Esophagus squamous epithelium (tissue), 5 donors: ENCODE measurements at regions of chr18 and their contacts with region 1.

Region 1: DNA sequence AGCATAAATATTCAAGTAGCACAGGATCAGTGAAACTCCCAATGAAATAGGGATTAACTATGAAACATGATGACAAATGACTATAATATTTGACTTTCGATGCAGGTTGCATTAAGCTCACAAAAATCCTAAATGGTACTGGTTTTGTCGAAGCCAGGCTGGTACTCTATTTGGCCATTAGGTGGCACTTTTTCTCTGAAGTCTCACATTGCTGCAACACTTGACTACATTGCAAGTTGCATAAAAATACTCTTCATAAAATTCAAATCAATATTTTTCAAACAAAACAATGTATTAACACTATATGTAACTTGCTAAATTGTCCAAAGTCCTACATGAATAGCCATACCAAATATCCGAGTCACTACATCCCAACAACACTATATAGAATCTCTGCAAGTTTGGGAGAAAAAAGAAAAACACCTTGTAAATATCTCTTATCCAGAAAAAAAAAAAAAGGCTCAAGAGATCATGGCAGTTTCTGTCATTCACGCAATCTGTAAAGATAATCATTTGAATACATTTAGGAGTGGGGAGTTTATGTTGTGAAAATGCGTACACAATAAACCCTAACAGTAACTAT is 9.5 kb downstream of the RTTN start:
- DNase-seq: no peak
- H3K4me3 ChIP-seq: no peak overlapping the region
- H3K27ac ChIP-seq: no peak overlapping the region
- H3K4me1 ChIP-seq: no peaks in the 10 kb centered on the region
- H3K27me3 ChIP-seq: no peaks in the 10 kb centered on the region
- CTCF ChIP-seq: peak; percentile 40 to 82 (median 70)
- POLR2A ChIP-seq: no peak

Region 2: GRCh38 chr18:70431203-70431624 is 235.3 kb after region 1 on chr18:
- intact Hi-C with region 1: loop called (anchors 5 kb)
- DNase-seq: no peak
- H3K4me3 ChIP-seq: no peak overlapping the region
- H3K27ac ChIP-seq: peak overlapping the region in 1 of 4 donors; percentile 55
- H3K4me1 ChIP-seq: peaks cover 0 to 27% (median 11%) of the 10 kb centered on the region in 3 donors
- H3K27me3 ChIP-seq: no peaks in the 10 kb centered on the region
- CTCF ChIP-seq: no peak
- POLR2A ChIP-seq: no peak

Region 3: DNA sequence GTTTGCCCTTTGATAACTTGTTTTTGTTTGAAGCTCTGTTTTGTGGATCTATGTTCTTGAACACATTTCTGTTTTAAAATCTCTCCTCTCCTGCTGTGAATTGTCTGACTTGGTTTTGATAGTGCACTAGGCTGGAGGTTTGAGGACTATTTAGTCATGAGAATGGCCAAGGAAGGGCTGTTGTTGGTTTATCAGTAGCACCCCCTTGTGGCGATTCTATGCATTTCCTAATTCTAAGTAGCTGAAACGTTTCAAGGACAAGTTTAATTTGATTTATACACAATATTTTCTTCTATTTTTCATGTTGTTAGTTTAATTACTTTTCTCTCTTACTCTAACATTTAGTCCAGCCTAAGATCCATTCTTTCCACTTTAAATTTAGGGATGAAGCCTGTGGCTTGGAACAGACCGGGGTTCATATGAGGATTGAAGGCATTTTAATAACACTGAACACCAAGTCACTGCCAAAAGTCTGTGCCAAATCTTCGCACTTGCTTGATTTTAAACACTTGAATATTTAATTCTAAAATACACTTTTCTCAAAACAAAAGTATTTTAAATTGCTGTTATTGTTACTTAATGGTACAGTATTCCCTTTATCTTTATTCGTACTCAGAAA is 258.9 kb after region 1 on chr18:
- intact Hi-C with region 1: loop called (anchors 5 kb)
- DNase-seq: no peak
- H3K4me3 ChIP-seq: no peak overlapping the region
- H3K27ac ChIP-seq: no peak overlapping the region
- H3K4me1 ChIP-seq: no peaks in the 10 kb centered on the region
- H3K27me3 ChIP-seq: peaks cover 0 to 18% (median 0%) of the 10 kb centered on the region in 4 donors
- CTCF ChIP-seq: peak; percentile 42 to 79 (median 68)
- POLR2A ChIP-seq: no peak

Region 4: GRCh38 chr18:70698574-70698973 is 502.6 kb after region 1 on chr18:
- intact Hi-C with region 1: no loop called
- DNase-seq: no peak
- H3K4me3 ChIP-seq: no peak overlapping the region
- H3K27ac ChIP-seq: no peak overlapping the region
- H3K4me1 ChIP-seq: no peaks in the 10 kb centered on the region
- H3K27me3 ChIP-seq: no peaks in the 10 kb centered on the region
- CTCF ChIP-seq: no peak
- POLR2A ChIP-seq: no peak